ENCODE measurements at regions of chr7 and their contacts with region 1.

Region 1: GRCh38 chr7:7103343-7104313 is 78.7 kb upstream of the C1GALT1 start:
- DNase-seq: peak; percentile 59
- H3K27ac ChIP-seq: peak overlapping the region; percentile 47
- CTCF ChIP-seq: peak; percentile 65

Region 2: DNA sequence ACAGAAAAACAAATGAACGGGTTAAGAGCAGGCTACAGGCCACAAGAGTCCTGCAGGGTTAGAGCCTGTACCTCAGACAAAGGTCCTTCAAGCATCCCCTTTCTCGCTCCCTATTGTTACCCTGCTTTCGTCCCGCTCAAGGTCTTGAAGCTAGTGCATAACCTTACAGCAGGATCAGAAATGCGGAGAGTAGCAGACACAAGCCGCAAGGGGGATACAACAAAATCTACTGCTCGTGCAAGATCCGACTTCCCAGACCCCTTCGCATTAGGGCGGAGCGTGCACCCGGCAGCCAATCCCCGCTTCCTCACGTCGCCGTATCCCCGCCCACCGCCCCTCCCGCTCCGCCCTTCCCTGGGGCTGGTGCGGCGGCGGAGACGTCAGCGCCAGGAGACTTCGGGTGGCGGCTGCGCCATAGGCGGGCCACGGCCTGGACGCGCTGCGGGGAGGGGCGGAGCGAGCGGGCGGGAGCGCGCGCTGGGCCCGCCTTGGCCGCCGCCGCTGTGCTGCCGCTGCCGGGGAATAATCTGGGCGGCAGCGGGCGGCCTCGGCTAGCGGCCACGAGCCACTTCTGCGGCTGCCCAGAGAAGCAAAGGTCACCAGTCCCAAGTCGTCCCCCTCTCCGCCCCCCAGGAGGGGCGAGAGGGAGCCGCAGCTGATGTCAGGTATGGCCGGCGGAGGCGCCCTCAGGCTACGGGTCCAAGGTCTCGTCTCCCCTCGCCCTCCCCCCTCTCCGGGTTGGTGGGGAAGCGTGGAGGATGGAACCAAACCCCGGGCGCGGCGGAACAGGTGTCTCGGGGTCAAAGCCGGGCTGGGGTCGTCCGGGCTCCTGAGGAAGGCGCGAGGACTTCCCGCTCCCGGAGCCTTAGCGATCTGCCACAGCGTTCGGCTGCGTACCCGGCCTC is 78.8 kb after region 1 on chr7 and contains the start of gene C1GALT1:
- CTCF ChIA-PET with region 1: interaction called, 12 read pairs
- POLR2A ChIA-PET with region 1: no interaction called
- DNase-seq: peak; percentile 97
- H3K27ac ChIP-seq: peak within 1 kb of the TSS; percentile 92
- CTCF ChIP-seq: peak; percentile 55

Region 3: GRCh38 chr7:7216279-7216678 is 112.7 kb after region 1 on chr7:
- CTCF ChIA-PET with region 1: no interaction called
- POLR2A ChIA-PET with region 1: no interaction called
- DNase-seq: no peak
- H3K27ac ChIP-seq: no peak overlapping the region
- CTCF ChIP-seq: no peak